ENCODE measurements at regions of chr1 and their contacts with region 1.

Region 1: DNA sequence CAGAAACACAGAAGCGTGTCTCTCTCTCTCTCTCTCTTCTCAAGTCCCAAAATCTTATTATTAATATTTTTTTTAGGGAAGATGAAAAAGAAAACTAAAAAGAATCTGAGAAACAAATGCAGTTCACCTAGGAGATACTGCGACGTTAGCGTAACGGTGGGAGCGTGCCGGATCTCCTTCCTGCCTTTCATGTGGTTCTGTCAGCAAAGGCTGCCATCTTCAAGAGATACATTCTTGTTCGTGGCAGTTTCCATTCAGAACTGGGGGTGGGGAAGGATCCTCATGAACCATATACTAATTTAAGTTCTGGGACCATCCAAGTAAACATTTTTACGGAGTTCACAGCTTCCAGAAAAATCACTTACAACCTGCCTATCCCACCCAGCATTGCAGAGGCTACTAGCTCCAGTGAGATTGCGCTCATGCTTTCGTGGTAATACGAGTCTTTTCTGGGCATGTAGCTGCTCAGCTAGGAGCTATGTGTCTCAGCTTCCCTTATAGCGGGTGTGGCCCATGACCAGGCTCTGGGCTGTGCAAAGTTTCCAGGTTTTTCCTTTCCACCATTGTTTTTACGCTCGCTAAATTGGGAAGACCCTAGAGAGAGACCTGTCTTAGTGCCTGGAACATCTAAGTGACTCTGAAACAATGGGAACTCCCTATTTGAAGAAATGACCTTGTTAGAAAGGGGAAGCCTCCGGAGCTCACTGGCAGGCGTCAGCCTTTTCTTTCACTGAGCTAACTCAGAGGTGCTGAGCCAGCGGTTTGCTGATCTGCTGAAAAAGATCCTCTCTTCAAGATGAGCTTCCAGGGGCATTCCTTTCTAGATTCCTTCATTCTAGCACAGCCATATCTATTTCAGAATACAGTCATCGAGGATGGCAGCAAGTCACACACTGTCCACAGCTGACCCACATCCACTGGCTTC is 17.3 kb downstream of the SLAMF1 start:
- DNase-seq: peak; percentile 29 to 95 (median 93)
- ATAC-seq: peak; percentile 88
- H3K4me3 ChIP-seq: peak overlapping the region; percentile 56
- H3K4me3 Mint-ChIP-seq: peak overlapping the region; percentile 80 to 99 (median 86)
- H3K27ac ChIP-seq: peak overlapping the region; percentile 95
- H3K27ac Mint-ChIP-seq: peak overlapping the region; percentile 86 to 100 (median 100)
- H3K4me1 ChIP-seq: peaks cover 95 to 96% of the 10 kb centered on the region in 2 donors
- H3K4me1 Mint-ChIP-seq: peaks cover 72 to 100% (median 97%) of the 10 kb centered on the region in 7 donors
- H3K27me3 ChIP-seq: no peaks in the 10 kb centered on the region
- H3K27me3 Mint-ChIP-seq: no peaks in the 10 kb centered on the region

Region 2: GRCh38 chr1:160618763-160619274 is 10.7 kb before region 1 on chr1:
- CTCF ChIA-PET with region 1: interaction called, 30 read pairs
- POLR2A ChIA-PET with region 1: interaction called, 33 read pairs
- intact Hi-C with region 1: loop called (anchors 1 kb)
- DNase-seq: peak in 6 of 9 donors; percentile 34 to 49 (median 46)
- ATAC-seq: peak; percentile 83
- H3K4me3 ChIP-seq: no peak overlapping the region
- H3K4me3 Mint-ChIP-seq: peak overlapping the region in 3 of 10 donors; percentile 2 to 46 (median 24)
- H3K27ac ChIP-seq: no peak overlapping the region
- H3K27ac Mint-ChIP-seq: peak overlapping the region; percentile 21 to 83 (median 69)
- H3K4me1 ChIP-seq: peaks cover 23% of the 10 kb centered on the region in 2 donors
- H3K4me1 Mint-ChIP-seq: peaks cover 32 to 84% (median 68%) of the 10 kb centered on the region in 7 donors
- H3K27me3 ChIP-seq: no peaks in the 10 kb centered on the region
- H3K27me3 Mint-ChIP-seq: no peaks in the 10 kb centered on the region

Region 3: DNA sequence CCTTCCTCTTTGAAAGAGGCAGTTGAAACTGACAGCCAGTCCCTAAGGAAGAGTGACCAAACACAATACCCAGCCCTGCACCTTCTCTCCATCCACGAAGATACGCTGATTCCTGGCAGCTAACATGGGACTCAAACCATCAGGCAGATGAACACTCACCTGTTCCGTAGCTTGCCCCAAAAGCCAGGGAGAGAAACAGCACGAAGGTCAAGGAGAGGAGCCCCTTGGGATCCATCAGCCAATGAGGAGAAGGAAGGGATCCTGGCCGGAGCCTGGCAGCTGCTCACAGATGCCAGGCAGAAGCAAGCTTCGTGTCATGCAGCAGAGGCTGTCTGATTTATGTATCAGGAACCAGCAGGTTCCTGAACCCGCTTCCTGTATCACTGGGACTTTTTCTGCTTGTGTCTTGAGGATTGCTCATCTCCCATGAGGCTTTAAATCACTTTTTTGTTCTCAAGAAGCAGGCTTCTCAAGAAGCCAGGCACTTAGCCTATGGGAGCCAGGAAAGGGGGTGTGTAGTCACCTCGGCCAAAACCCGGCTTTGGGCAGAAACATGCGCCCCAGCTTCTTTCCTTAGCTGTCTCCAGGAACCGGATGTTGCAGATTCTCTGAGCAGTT is 17.3 kb after region 1 on chr1 and contains the start of gene SLAMF1:
- CTCF ChIA-PET with region 1: interaction called, 21 read pairs
- POLR2A ChIA-PET with region 1: interaction called, 94 read pairs
- intact Hi-C with region 1: loop called in 1 of 2 experiments (anchors 1 kb)
- DNase-seq: peak in 8 of 9 donors; percentile 45 to 65 (median 52)
- ATAC-seq: peak; percentile 83
- H3K4me3 ChIP-seq: peak within 1 kb of the TSS; percentile 86
- H3K4me3 Mint-ChIP-seq: peak within 1 kb of the TSS; percentile 91 to 100 (median 95)
- H3K27ac ChIP-seq: peak within 1 kb of the TSS; percentile 89
- H3K27ac Mint-ChIP-seq: peak within 1 kb of the TSS; percentile 89 to 95 (median 94)
- H3K4me1 ChIP-seq: peaks cover 26 to 52% of the 10 kb centered on the region in 2 donors
- H3K4me1 Mint-ChIP-seq: peaks cover 46 to 92% (median 74%) of the 10 kb centered on the region in 7 donors
- H3K27me3 ChIP-seq: no peaks in the 10 kb centered on the region
- H3K27me3 Mint-ChIP-seq: no peaks in the 10 kb centered on the region
- total RNA-seq, gene SLAMF1: 18.3 to 90.3 (median 31.9) TPM

Region 4: DNA sequence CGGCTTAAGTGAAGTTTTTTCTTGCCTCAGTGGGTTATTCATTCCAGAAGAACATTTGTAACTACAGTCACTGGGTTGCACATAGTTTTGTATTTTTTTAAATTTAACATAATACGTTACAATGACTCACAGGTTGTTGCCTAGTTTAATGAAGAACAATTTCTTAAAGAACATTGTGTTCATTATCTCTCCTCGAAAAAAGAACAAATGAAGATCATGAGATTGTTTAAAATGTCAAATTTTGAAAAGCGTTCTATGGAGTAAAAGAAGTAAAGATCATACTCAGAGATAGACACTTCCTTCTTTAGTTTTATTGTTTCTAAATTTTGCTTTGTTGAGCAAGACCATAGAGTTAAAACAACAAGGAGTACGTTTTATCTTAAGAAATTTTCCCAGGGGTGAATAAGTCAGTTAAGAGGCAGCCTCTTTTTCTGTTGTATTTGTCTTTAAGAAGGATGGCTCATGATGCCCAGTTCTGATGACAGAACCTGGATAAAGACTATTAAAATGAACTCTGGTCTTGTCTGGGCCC is 27.8 kb after region 1 on chr1:
- CTCF ChIA-PET with region 1: interaction called, 4 read pairs
- POLR2A ChIA-PET with region 1: interaction called, 24 read pairs
- intact Hi-C with region 1: loop called in 1 of 2 experiments (anchors 1 kb)
- DNase-seq: peak in 1 of 9 donors; percentile 29
- ATAC-seq: peak; percentile 29
- H3K4me3 ChIP-seq: no peak overlapping the region
- H3K4me3 Mint-ChIP-seq: peak overlapping the region in 9 of 10 donors; percentile 4 to 61 (median 55)
- H3K27ac ChIP-seq: peak overlapping the region; percentile 44
- H3K27ac Mint-ChIP-seq: peak overlapping the region; percentile 7 to 89 (median 83)
- H3K4me1 ChIP-seq: peaks cover under 1 to 60% of the 10 kb centered on the region in 2 donors
- H3K4me1 Mint-ChIP-seq: peaks cover 39 to 96% (median 84%) of the 10 kb centered on the region in 7 donors
- H3K27me3 ChIP-seq: no peaks in the 10 kb centered on the region
- H3K27me3 Mint-ChIP-seq: no peaks in the 10 kb centered on the region

Region 5: GRCh38 chr1:160664573-160665051 is 35.1 kb after region 1 on chr1:
- CTCF ChIA-PET with region 1: interaction called, 4 read pairs
- POLR2A ChIA-PET with region 1: interaction called, 24 read pairs
- intact Hi-C with region 1: loop called in 1 of 2 experiments (anchors 1 kb)
- DNase-seq: peak in 4 of 9 donors; percentile 44 to 59 (median 46)
- ATAC-seq: peak; percentile 84
- H3K4me3 ChIP-seq: peak overlapping the region; percentile 22
- H3K4me3 Mint-ChIP-seq: peak overlapping the region; percentile 53 to 87 (median 76)
- H3K27ac ChIP-seq: peak overlapping the region; percentile 10
- H3K27ac Mint-ChIP-seq: peak overlapping the region; percentile 77 to 96 (median 89)
- H3K4me1 ChIP-seq: peaks cover 44 to 49% of the 10 kb centered on the region in 2 donors
- H3K4me1 Mint-ChIP-seq: peaks cover 52 to 84% (median 71%) of the 10 kb centered on the region in 7 donors
- H3K27me3 ChIP-seq: no peaks in the 10 kb centered on the region
- H3K27me3 Mint-ChIP-seq: no peaks in the 10 kb centered on the region

Region 6: DNA sequence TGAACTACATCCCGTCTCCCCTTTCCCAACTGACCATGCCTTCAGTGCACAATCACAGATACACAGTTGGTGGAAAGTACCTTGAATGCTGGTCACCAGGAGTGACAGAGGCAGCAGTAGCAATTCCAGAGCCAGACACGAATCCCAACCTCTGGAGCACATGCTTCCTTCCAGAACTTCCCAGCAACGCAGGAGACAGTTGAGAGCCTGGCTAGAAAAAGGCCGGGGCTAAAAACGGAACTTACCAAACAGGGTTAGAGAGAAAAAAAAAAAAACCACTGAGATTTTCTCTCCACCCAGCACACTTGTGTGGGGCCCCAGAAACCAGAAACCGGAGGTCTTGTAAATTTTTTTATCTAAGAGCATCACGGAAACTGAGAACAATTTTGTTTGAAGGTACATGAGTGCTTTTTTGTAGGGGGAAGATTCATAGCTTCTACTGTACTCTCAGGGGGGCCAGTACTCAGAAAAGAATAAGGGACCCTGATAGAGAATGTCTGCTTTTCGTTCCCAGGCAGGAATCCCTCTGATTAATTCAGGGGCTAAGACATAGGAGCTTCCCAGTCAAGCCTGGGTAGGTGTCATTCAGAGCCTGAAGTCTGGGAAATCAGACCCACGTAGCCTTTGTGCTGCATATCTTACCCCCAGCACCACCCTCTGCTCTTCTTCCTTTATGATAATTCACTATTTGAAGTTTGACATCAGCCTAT is 82.2 kb after region 1 on chr1 and contains the start of gene CD48:
- CTCF ChIA-PET with region 1: no interaction called
- POLR2A ChIA-PET with region 1: interaction called, 3 read pairs
- intact Hi-C with region 1: loop called in 1 of 2 experiments (anchors 1 kb)
- DNase-seq: peak in 8 of 9 donors; percentile 39 to 88 (median 82)
- ATAC-seq: peak; percentile 67
- H3K4me3 ChIP-seq: peak within 1 kb of the TSS; percentile 90
- H3K4me3 Mint-ChIP-seq: no peak within 1 kb of the TSS
- H3K27ac ChIP-seq: peak within 1 kb of the TSS; percentile 99
- H3K27ac Mint-ChIP-seq: no peak within 1 kb of the TSS
- H3K4me1 ChIP-seq: peaks cover 52 to 60% of the 10 kb centered on the region in 2 donors
- H3K4me1 Mint-ChIP-seq: peaks cover 22 to 49% (median 44%) of the 10 kb centered on the region in 7 donors
- H3K27me3 ChIP-seq: no peaks in the 10 kb centered on the region
- H3K27me3 Mint-ChIP-seq: no peaks in the 10 kb centered on the region
- total RNA-seq, gene CD48: 253 to 438 (median 358) TPM

Region 7: DNA sequence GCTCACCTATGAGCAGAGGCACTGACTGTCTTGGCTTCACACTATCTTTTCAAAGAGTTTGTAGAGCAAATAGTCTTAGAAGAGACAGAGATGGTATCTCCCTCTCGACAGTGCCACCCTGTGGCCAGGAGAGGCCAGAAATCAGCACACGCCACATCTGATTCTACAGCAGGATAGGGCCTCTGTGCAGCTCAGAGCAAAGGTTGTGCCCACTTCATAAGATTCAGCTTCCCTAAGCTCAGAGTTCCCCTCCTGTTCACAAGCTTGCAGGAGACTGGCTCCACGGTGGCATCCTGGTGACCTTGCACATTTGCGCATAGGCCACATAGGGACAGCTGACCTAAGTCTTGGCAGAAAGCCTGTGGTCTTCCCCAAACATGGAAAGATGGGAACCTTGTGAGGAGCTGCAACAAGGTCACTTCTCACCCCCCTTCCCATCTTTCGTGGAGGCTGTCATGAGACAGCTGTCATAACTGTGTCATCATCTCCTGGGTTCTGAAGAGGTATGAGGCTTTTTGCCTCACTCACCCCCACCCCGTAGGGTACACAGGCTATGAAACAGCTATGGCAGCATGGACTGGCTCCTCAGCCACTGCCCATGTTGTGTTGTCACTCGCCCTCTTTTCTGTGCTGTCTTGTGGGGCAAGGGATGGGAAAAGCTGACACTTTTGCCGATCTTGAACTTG is 322.0 kb after region 1 on chr1:
- CTCF ChIA-PET with region 1: no interaction called
- POLR2A ChIA-PET with region 1: no interaction called
- intact Hi-C with region 1: loop called in 1 of 2 experiments (anchors 5 kb)
- DNase-seq: peak; percentile 53 to 80 (median 71)
- ATAC-seq: peak; percentile 92
- H3K4me3 ChIP-seq: no peak overlapping the region
- H3K4me3 Mint-ChIP-seq: no peak overlapping the region
- H3K27ac ChIP-seq: no peak overlapping the region
- H3K27ac Mint-ChIP-seq: peak overlapping the region in 2 of 9 donors; percentile 26 to 48
- H3K4me1 ChIP-seq: peaks cover 0 to 16% of the 10 kb centered on the region in 2 donors
- H3K4me1 Mint-ChIP-seq: peaks cover 6 to 21% (median 11%) of the 10 kb centered on the region in 7 donors
- H3K27me3 ChIP-seq: no peaks in the 10 kb centered on the region
- H3K27me3 Mint-ChIP-seq: no peaks in the 10 kb centered on the region